CD8-positive, alpha-beta T cell (primary cell): ENCODE measurements at regions of chr1 and their contacts with region 1.

Region 1: DNA sequence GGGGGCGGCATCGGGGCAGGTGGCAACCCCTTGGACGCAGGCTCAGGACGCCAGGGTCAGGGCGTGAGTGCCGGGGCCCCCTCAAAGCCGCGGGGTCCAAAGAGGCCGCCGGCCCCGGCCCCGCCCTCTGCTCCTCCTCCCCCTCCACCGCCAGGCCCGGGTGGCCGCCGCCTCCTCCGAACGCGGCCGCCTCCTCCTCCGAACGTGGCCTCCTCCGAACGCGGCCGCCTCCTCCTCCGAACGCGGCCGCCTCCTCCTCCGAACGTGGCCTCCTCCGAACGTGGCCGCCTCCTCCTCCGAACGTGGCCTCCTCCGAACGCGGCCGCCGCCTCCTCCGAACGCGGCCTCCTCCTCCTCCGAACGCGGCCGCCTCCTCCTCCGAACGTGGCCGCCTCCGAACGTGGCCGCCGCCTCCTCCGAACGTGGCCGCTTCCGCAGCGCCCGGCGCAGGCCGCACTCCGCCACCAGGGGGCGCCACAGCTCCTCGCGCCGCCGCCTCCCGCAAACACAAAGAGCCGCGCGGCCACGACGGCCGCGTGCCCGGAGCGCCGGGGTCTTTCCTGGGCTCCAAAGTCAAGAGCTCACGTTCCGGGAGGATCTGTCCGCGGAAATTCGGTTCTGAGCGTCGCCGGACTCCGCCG is 19.3 kb upstream of the SAMD11 start:
- DNase-seq: peak; percentile 70 to 93 (median 84)
- ATAC-seq: peak; percentile 93
- H3K4me3 ChIP-seq: peak overlapping the region in 1 of 2 experiments; percentile 27
- H3K4me3 Mint-ChIP-seq: peak overlapping the region; percentile 74
- H3K27ac ChIP-seq: no peak overlapping the region
- H3K27ac Mint-ChIP-seq: no peak overlapping the region
- H3K4me1 ChIP-seq: peaks cover 13% of the 10 kb centered on the region
- H3K4me1 Mint-ChIP-seq: peaks cover 9% of the 10 kb centered on the region
- H3K27me3 ChIP-seq: peaks cover 6 to 12% of the 10 kb centered on the region in 2 experiments
- H3K27me3 Mint-ChIP-seq: peaks cover 31% of the 10 kb centered on the region
- CTCF ChIP-seq: peak; percentile 71

Region 2: DNA sequence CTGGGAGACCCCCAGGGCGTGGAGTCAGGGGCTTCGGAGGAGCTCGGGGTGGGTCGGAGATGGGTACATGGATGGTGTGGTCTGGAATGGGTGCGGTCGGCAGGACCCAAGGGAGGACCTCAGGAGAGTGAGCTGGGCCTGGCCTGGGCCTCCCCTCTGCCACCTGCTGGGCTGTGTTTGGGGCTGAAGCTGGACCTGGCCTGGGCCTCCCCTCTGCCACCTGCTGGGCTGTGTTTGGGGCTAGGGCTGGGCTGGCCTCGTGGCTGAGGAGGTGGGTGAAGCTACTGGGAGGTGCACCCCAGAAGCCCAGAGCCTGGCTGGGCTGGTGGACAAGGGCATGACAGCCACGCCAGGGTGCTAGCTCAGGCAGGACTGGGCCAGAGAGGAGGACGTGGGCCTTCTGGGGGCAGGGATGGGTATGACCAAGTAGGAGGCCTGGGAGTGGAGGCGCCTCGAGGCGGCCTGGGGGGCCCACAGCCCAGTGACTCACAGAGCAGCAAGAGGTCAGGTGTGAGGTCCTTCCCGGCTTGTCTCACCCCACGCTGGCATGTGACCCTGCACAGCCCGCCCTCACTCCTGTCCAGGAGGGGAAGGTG is 33.8 kb after region 1 on chr1:
- CTCF ChIA-PET with region 1: interaction called, 3 read pairs
- POLR2A ChIA-PET with region 1: no interaction called
- intact Hi-C with region 1: loop called (anchors 1 kb)
- DNase-seq: no peak
- ATAC-seq: no peak
- H3K4me3 ChIP-seq: no peak overlapping the region
- H3K4me3 Mint-ChIP-seq: no peak overlapping the region
- H3K27ac ChIP-seq: no peak overlapping the region
- H3K27ac Mint-ChIP-seq: no peak overlapping the region
- H3K4me1 ChIP-seq: peaks cover 13% of the 10 kb centered on the region
- H3K4me1 Mint-ChIP-seq: peaks cover 9% of the 10 kb centered on the region
- H3K27me3 ChIP-seq: peaks cover 15 to 40% of the 10 kb centered on the region in 2 experiments
- H3K27me3 Mint-ChIP-seq: peaks cover 17% of the 10 kb centered on the region
- CTCF ChIP-seq: no peak

Region 3: GRCh38 chr1:958823-959729 is 54.6 kb after region 1 on chr1 and contains the start of gene NOC2L:
- CTCF ChIA-PET with region 1: interaction called, 4 read pairs
- POLR2A ChIA-PET with region 1: interaction called, 4 read pairs
- intact Hi-C with region 1: loop called in 1 of 2 experiments (anchors 5 kb)
- DNase-seq: peak; percentile 91 to 99 (median 96)
- ATAC-seq: peak; percentile 83
- H3K4me3 ChIP-seq: peak within 1 kb of the TSS; percentile 99 to 100
- H3K4me3 Mint-ChIP-seq: peak within 1 kb of the TSS; percentile 86
- H3K27ac ChIP-seq: peak within 1 kb of the TSS; percentile 75 to 80
- H3K27ac Mint-ChIP-seq: peak within 1 kb of the TSS; percentile 77
- H3K4me1 ChIP-seq: peaks cover 29% of the 10 kb centered on the region
- H3K4me1 Mint-ChIP-seq: peaks cover 8% of the 10 kb centered on the region
- H3K27me3 ChIP-seq: no peaks in the 10 kb centered on the region
- H3K27me3 Mint-ChIP-seq: no peaks in the 10 kb centered on the region
- CTCF ChIP-seq: no peak
- total RNA-seq, gene NOC2L: 54.0 to 54.7 TPM

Region 4: DNA sequence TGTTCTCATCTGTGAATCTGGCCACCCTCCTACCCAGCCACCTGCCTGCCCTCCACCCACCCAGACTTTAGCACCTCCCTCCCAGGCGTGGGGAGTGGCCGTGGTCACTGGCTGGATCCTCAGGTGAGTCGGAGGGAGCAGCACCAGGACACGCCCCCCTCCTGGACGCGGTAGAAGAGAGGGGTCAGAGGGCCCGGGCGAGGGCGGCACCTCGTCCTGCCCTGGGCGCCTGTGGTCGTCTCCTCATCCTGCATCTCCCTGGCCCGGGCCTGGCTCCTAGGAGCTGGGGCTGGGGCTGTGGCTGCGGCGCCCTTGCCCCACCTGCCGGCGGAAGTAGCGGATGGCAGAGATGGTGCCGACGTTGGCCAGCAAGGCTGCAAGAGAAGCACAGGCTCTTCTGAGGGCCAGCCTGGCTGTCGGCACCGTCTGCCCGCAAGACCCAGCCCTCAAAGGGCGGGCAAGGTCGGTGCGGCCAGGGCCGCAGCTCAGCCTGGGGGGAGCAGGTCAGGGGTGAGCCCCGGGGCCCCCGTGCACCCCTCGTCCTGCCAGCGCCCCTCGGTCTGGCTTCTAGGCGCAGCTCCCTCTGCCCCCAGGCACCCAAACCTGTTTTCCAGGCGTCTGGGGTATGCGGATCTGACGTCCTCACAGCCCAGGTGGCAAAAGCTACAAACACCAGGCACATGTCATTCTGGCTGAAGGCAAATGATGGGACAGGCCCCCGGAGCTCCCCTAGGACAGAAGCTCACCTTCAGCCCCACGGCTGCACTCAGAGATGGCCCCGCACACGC is 71.7 kb after region 1 on chr1:
- CTCF ChIA-PET with region 1: interaction called, 15 read pairs
- POLR2A ChIA-PET with region 1: no interaction called
- intact Hi-C with region 1: loop called in 1 of 2 experiments (anchors 1 kb)
- DNase-seq: peak in 8 of 9 experiments; percentile 56 to 82 (median 72)
- ATAC-seq: peak; percentile 88
- H3K4me3 ChIP-seq: no peak overlapping the region
- H3K4me3 Mint-ChIP-seq: peak overlapping the region; percentile 37
- H3K27ac ChIP-seq: no peak overlapping the region
- H3K27ac Mint-ChIP-seq: no peak overlapping the region
- H3K4me1 ChIP-seq: peaks cover 9% of the 10 kb centered on the region
- H3K4me1 Mint-ChIP-seq: peaks cover 9% of the 10 kb centered on the region
- H3K27me3 ChIP-seq: peaks cover 8 to 27% of the 10 kb centered on the region in 2 experiments
- H3K27me3 Mint-ChIP-seq: peaks cover 19% of the 10 kb centered on the region
- CTCF ChIP-seq: peak; percentile 59

Region 5: GRCh38 chr1:983799-984473 is 79.5 kb after region 1 on chr1:
- CTCF ChIA-PET with region 1: interaction called, 14 read pairs
- POLR2A ChIA-PET with region 1: no interaction called
- intact Hi-C with region 1: no loop called
- DNase-seq: peak in 8 of 9 experiments; percentile 49 to 80 (median 69)
- ATAC-seq: peak; percentile 95
- H3K4me3 ChIP-seq: no peak overlapping the region
- H3K4me3 Mint-ChIP-seq: no peak overlapping the region
- H3K27ac ChIP-seq: no peak overlapping the region
- H3K27ac Mint-ChIP-seq: no peak overlapping the region
- H3K4me1 ChIP-seq: no peaks in the 10 kb centered on the region
- H3K4me1 Mint-ChIP-seq: no peaks in the 10 kb centered on the region
- H3K27me3 ChIP-seq: peaks cover 0 to 5% of the 10 kb centered on the region in 2 experiments
- H3K27me3 Mint-ChIP-seq: peaks cover 16% of the 10 kb centered on the region
- CTCF ChIP-seq: peak; percentile 86

Region 6: DNA sequence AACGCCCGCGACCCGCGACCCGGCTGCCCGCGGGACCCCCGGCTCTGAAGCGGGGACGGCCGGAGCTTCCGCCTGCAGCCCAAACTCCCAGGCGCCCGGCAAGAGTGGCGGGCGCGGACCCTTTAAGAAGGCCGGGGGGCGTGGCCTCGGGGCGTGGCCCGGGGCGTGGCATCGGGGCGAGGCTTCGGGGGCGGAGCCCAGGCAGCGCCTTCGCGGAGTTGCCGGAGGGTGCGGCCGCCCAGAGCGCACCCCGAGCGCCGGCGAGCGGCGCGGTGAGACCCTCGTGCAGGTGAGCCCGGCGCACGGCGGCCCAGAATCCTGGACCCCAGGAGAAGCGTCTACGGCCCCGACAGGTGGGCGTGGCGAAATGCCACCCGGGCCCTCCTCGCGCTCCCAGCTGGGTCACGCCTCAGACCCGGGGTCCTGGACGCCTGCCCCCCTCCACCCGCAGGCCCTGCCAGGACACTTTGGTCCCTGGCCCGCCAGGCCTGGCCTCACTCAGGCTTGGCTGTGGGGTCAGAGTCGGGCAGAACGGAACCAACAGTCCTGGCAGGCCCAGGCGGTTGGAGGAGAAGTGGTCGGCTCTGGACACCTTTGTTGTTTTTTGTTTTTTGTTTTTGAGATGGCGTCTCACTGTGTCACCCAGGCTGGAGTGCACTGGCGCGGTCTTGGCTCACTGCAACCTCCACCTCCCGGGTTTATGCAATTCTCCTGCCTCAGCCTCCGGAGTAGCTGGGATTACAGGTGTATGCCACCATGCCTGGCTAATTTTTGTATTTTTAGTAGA is 155.3 kb after region 1 on chr1:
- CTCF ChIA-PET with region 1: no interaction called
- POLR2A ChIA-PET with region 1: no interaction called
- intact Hi-C with region 1: loop called in 1 of 2 experiments (anchors 10 kb)
- DNase-seq: peak; percentile 86 to 96 (median 90)
- ATAC-seq: peak; percentile 67
- H3K4me3 ChIP-seq: peak overlapping the region; percentile 19 to 66
- H3K4me3 Mint-ChIP-seq: peak overlapping the region; percentile 51
- H3K27ac ChIP-seq: no peak overlapping the region
- H3K27ac Mint-ChIP-seq: no peak overlapping the region
- H3K4me1 ChIP-seq: peaks cover 45% of the 10 kb centered on the region
- H3K4me1 Mint-ChIP-seq: peaks cover 13% of the 10 kb centered on the region
- H3K27me3 ChIP-seq: peaks cover 0 to 38% of the 10 kb centered on the region in 2 experiments
- H3K27me3 Mint-ChIP-seq: peaks cover 17% of the 10 kb centered on the region
- CTCF ChIP-seq: no peak